ENCODE measurements at regions of chr12 and their contacts with region 1.

Region 1: DNA sequence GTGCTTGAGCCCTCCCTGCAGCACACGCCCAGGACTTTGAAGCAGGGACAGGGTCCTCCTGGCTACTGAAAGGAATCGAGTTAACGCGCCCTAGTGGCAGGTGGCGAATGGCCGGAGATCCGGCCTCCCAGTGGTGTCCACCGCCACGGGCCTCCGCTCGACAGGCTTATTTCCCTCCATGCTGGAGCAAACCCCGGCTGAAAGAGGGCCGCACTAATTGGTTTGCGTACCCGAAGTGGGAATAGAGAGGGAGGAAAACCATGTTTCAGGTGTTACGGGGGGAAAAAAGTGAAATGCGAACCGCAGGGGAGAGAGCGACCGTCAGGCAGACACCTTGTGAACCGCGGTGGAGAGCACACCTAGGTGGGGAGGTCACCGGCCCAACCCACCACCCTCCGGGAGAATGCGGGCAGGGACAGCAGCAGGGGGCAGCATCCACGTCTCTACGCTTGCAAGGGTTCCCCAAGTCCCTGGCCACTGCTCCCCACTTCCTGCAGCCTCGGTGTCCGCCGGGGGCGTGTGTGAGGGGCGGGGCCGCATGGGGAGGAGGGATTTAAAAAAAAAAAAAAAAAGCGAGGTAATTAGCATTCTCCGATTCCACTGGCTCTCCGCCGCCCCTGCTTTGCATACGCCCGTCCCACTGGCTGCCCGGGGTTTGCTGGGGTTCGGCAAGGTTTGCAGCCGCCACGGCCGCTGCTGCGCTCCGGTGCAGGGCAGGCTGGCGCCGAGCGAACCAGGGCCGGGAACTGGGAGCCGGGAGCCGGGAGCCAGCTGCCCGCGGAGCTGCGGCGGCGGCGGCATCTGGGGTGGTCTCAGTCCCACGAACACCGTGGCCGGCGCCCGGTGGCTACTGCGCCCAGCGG is 224.6 kb upstream of the CRY1 start:
- DNase-seq: peak; percentile 25 to 51
- ATAC-seq: peak; percentile 55 to 78
- H3K4me3 ChIP-seq: peak overlapping the region; percentile 44 to 61 (median 50)
- H3K27ac ChIP-seq: no peak overlapping the region
- H3K4me1 ChIP-seq: peaks cover 11% of the 10 kb centered on the region in 2 donors
- H3K27me3 ChIP-seq: peaks cover 11 to 45% (median 24%) of the 10 kb centered on the region in 3 donors
- CTCF ChIP-seq: no peak
- POLR2A ChIP-seq: no peak

Region 2: GRCh38 chr12:106551410-106551809 is 766.6 kb before region 1 on chr12:
- in situ Hi-C with region 1: no loop called
- intact Hi-C with region 1: no loop called
- DNase-seq: no peak
- ATAC-seq: no peak
- H3K4me3 ChIP-seq: no peak overlapping the region
- H3K27ac ChIP-seq: no peak overlapping the region
- H3K4me1 ChIP-seq: no peaks in the 10 kb centered on the region
- H3K27me3 ChIP-seq: no peaks in the 10 kb centered on the region
- CTCF ChIP-seq: no peak
- POLR2A ChIP-seq: no peak

Region 3: GRCh38 chr12:107600581-107601144 is 282.7 kb after region 1 on chr12:
- in situ Hi-C with region 1: no loop called
- intact Hi-C with region 1: loop called (anchors 5 kb)
- DNase-seq: no peak
- ATAC-seq: no peak
- H3K4me3 ChIP-seq: no peak overlapping the region
- H3K27ac ChIP-seq: no peak overlapping the region
- H3K4me1 ChIP-seq: no peaks in the 10 kb centered on the region
- H3K27me3 ChIP-seq: no peaks in the 10 kb centered on the region
- CTCF ChIP-seq: no peak
- POLR2A ChIP-seq: no peak

Region 4: DNA sequence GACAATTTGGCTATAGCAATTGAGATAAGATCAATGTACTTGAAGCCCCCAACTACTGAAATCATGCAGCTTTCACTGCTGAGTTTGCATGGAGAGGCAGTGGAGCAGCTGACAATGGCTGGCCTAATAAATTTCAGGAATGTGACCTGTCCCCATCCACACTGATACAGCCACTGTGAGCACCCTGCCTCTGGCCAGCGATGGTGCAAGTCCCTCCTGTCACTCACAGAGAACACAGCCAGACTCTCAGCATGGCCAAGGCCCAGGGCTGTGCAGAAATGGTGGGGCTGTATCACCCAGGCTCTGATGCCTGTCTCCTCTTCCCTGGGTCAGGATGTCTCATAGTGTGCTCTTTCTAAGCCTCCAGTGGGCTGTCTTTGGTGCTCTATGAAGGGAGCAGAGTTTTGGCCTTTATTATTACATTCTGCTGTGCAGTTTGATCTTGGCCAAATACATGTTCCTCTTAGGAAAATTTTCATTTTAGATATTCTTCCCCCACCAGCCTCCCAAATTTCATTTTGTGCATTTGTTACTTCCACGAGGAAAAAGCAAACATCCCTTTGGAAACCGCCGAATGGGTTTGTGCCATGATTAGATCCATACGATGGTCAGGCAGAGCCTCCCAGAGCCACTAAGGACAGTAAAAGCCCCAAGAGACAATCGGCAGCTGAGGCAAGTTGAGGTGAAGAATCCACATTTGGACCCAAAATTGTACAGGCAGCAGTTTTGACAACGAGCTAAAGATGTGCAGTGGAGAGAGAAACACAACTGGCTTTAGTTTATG is 726.0 kb after region 1 on chr12:
- in situ Hi-C with region 1: no loop called
- intact Hi-C with region 1: no loop called
- DNase-seq: no peak
- ATAC-seq: no peak
- H3K4me3 ChIP-seq: no peak overlapping the region
- H3K27ac ChIP-seq: no peak overlapping the region
- H3K4me1 ChIP-seq: peaks cover 0 to 3% of the 10 kb centered on the region in 2 donors
- H3K27me3 ChIP-seq: no peaks in the 10 kb centered on the region
- CTCF ChIP-seq: no peak
- POLR2A ChIP-seq: no peak

Region 5: GRCh38 chr12:108099073-108099472 is 781.1 kb after region 1 on chr12:
- in situ Hi-C with region 1: no loop called
- intact Hi-C with region 1: no loop called
- DNase-seq: no peak
- ATAC-seq: no peak
- H3K4me3 ChIP-seq: no peak overlapping the region
- H3K27ac ChIP-seq: no peak overlapping the region
- H3K4me1 ChIP-seq: no peaks in the 10 kb centered on the region
- H3K27me3 ChIP-seq: no peaks in the 10 kb centered on the region
- CTCF ChIP-seq: peak in 1 of 5 experiments; percentile 12
- POLR2A ChIP-seq: no peak

Measured in gastrocnemius medialis (tissue), 4 donors.